CD4-positive, alpha-beta memory T cell (primary cell): ENCODE measurements at regions of chr1 and their contacts with region 1.

Region 1: GRCh38 chr1:166838766-166839599 is at the start of gene POGK:
- DNase-seq: peak; percentile 79 to 85 (median 81)
- H3K4me3 ChIP-seq: peak within 1 kb of the TSS; percentile 72 to 77
- H3K4me3 Mint-ChIP-seq: peak within 1 kb of the TSS; percentile 90 to 98 (median 92)
- H3K27ac ChIP-seq: peak within 1 kb of the TSS; percentile 86
- H3K27ac Mint-ChIP-seq: peak within 1 kb of the TSS; percentile 92 to 99 (median 98)
- H3K4me1 ChIP-seq: peaks cover 45% of the 10 kb centered on the region
- H3K4me1 Mint-ChIP-seq: peaks cover 32 to 61% (median 42%) of the 10 kb centered on the region in 4 donors
- H3K27me3 ChIP-seq: no peaks in the 10 kb centered on the region
- H3K27me3 Mint-ChIP-seq: no peaks in the 10 kb centered on the region
- total RNA-seq, gene POGK: 37.9 to 44.3 TPM

Region 2: GRCh38 chr1:166730299-166730888 is 108.6 kb before region 1 on chr1:
- CTCF ChIA-PET with region 1: no interaction called
- POLR2A ChIA-PET with region 1: no interaction called
- intact Hi-C with region 1: no loop called
- DNase-seq: no peak
- H3K4me3 ChIP-seq: no peak overlapping the region
- H3K4me3 Mint-ChIP-seq: no peak overlapping the region
- H3K27ac ChIP-seq: no peak overlapping the region
- H3K27ac Mint-ChIP-seq: no peak overlapping the region
- H3K4me1 ChIP-seq: no peaks in the 10 kb centered on the region
- H3K4me1 Mint-ChIP-seq: no peaks in the 10 kb centered on the region
- H3K27me3 ChIP-seq: no peaks in the 10 kb centered on the region
- H3K27me3 Mint-ChIP-seq: peaks cover 12 to 15% of the 10 kb centered on the region in 2 donors

Region 3: DNA sequence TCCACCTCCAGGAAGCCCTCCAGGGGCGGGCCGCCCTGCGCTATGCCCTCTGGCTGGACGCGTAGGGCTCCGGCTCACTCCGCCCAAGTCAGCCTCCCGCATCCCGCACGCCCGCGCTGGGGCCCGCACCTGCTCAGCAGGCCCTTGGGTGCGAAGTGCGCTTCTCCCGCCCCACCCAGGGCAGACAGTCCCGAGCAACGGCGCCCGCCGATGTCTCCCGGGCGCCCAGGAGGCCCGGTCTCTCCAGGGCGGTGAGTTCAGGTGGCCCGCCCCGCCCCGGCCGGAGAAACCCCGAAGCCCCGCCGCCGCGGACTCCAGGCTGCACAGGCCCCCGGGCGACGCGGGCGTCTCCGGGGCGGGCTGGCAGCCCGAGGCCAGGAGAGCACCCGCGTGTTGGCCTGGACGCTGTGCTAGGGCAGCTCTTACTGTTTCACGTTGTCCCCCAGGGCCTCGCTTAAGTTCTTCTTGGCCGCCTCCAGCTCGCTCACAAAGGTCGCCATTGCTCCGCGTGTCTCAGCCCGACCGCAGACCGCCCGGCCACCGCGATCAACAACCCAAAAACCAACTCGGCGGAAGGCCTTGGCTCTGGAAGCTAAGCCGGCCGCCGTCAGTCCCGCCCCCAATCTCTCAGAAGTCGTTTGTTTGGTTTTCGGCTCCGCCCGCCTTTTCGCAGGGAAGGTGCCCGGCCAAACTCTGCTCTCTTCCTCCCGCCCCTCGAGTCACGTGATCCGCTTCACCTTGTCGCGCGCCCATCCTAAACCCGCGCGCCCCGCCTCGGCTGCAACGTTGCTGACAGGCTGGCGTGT is 37.0 kb after region 1 on chr1 and contains the start of gene TADA1:
- CTCF ChIA-PET with region 1: interaction called, 4 read pairs
- POLR2A ChIA-PET with region 1: interaction called, 54 read pairs
- intact Hi-C with region 1: loop called (anchors 1 kb)
- DNase-seq: peak; percentile 96 to 99 (median 97)
- H3K4me3 ChIP-seq: peak within 1 kb of the TSS; percentile 52 to 88
- H3K4me3 Mint-ChIP-seq: peak within 1 kb of the TSS; percentile 95 to 100 (median 99)
- H3K27ac ChIP-seq: peak within 1 kb of the TSS; percentile 69
- H3K27ac Mint-ChIP-seq: peak within 1 kb of the TSS; percentile 92 to 99 (median 99)
- H3K4me1 ChIP-seq: peaks cover 32% of the 10 kb centered on the region
- H3K4me1 Mint-ChIP-seq: peaks cover 32 to 56% (median 45%) of the 10 kb centered on the region in 4 donors
- H3K27me3 ChIP-seq: no peaks in the 10 kb centered on the region
- H3K27me3 Mint-ChIP-seq: peaks cover 0 to 1% of the 10 kb centered on the region in 2 donors
- total RNA-seq, gene TADA1: 15.3 to 16.0 TPM